ENCODE measurements at regions of chr6 and their contacts with region 1.

Region 1: GRCh38 chr6:168908887-168909286 is 344.8 kb downstream of the THBS2 start:
- DNase-seq: no peak
- H3K4me3 ChIP-seq: no peak overlapping the region
- H3K27ac ChIP-seq: no peak overlapping the region
- H3K4me1 ChIP-seq: no peaks in the 10 kb centered on the region
- H3K27me3 ChIP-seq: no peaks in the 10 kb centered on the region
- CTCF ChIP-seq: no peak
- EP300 ChIP-seq: no peak
- POLR2A ChIP-seq: no peak

Region 2: DNA sequence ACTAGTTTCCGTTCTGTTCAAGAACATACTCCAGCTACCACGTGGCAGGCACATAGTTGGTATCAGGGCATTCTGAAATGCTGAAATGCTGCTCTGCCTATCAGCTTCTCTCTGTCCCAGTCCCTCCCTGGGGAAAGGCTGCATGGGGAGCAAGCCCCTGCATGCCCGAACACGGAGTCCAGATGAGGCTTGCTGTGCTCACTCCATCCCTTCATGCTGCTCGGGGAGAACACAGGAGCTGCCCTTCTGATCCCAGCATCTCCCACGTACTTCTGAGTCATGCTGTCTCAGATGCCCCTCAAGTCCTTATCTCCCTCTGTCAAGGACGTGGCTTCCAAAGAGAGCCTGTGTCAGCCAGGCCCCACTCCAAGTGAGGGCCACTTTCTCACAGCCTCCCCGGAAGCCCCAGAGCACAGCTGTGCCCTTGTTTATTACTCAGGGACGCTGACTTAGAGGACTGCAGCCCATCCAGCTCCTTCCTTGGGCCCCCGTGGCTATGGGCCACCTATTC is 315.4 kb after region 1 on chr6:
- intact Hi-C with region 1: loop called (anchors 10 kb)
- DNase-seq: peak; percentile 55
- H3K4me3 ChIP-seq: no peak overlapping the region
- H3K27ac ChIP-seq: peak overlapping the region in 2 of 4 donors; percentile 10 to 40
- H3K4me1 ChIP-seq: peaks cover 0 to 5% (median 0%) of the 10 kb centered on the region in 4 donors
- H3K27me3 ChIP-seq: no peaks in the 10 kb centered on the region
- CTCF ChIP-seq: no peak
- EP300 ChIP-seq: no peak
- POLR2A ChIP-seq: no peak

Measured in esophagus muscularis mucosa (tissue), 4 donors.